ENCODE measurements at regions of chr16 and their contacts with region 1.

Region 1: DNA sequence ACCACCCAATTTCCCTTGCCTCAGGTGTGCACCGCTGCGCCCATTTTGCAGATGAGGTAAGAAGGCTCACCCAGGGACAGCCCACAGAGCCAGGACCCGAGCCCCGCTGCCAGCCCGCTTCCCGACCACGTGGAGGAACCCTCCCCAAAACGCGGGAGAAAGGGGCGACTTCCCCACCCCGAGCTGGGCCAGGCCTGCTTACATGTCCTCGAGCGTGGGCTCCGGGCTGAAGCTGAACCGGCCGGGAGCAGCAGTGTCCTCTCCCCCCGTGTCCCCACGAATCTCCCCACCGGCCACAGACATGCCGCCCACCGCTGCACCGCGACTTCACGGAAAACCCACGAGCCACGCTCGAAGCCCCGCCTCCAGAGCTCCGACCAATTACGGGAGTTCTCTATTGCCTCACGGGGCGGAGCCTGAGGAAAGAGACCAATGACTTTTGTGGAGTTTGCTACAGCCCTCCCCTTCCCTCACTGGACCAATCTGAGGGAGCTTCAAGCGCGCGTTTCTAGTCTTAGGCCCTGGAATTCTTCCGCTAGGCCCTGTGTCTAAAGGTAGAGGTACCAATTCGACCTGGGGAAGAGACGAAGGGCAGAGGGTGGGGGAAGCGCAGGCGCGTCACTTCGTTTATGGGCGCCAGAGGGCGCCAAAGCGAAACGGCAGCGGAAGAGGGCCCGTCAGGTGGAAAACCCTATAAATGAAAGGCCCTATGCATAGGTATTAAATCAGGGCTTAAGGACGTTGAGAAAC is at the start of gene DCTPP1:
- DNase-seq: peak; percentile 98 to 100
- ATAC-seq: peak; percentile 99
- H3K4me3 ChIP-seq: peak within 1 kb of the TSS; percentile 70
- H3K27ac ChIP-seq: peak within 1 kb of the TSS; percentile 77 to 89
- H3K4me1 ChIP-seq: peaks cover 12% of the 10 kb centered on the region
- CTCF ChIP-seq: peak; percentile 95
- EP300 ChIP-seq: no peak
- POLR2A ChIP-seq: peak; percentile 48; the same call in 1 of the 2 replicates
- RAD21 ChIP-seq: peak; percentile 73 to 91
- polyA plus RNA-seq, gene DCTPP1: 105 and 122 TPM in 2 replicates

Region 2: GRCh38 chr16:30104090-30104489 is 325.8 kb before region 1 on chr16:
- CTCF ChIA-PET with region 1: no interaction called
- POLR2A ChIA-PET with region 1: no interaction called
- DNase-seq: no peak
- ATAC-seq: no peak
- H3K4me3 ChIP-seq: no peak overlapping the region
- H3K27ac ChIP-seq: no peak overlapping the region
- H3K4me1 ChIP-seq: no peaks in the 10 kb centered on the region
- CTCF ChIP-seq: no peak
- EP300 ChIP-seq: no peak
- POLR2A ChIP-seq: no peak
- RAD21 ChIP-seq: no peak

Region 3: DNA sequence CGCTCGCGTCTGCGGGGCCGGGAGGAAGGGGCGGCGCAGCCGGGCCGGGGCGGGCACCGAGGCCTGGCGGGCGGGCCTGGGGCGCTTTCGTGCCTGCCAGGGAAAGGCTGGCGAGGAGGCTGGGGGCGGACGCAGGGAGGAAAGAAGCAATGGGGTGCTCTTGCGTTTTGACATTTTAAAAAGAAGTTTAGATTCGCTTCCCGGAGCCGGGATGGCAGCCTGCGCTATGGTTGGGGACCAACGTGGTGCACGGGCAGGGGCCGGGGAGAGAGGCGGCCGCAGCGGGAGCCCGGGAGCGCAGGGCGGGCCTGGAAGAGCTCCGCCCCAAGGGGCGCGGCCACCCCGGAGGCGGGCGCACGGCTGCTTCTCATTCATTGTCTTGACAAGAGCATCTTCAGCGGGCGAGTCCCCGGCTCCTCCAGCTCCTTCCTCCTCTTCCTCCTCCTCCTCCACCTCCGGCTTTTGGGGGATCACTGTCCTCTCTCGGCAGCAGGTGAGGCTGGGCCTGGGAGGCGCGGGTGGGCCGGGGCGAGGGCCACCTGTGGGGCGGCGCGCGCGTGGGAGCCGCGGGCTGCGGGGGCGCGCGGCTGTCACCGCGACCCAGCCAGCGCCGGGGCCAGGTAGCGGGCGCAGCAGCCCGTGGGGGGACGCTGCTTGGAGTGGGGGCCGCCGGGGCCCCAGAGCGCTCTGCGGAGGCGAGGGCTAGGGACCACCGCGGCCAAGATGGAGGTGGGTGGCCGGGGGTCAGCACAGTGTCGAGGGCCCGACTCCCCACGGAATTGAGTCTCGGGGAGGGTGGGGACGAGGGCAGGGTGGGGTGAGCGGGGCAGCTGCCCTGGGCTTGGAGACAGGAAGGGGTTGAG is 246.4 kb before region 1 on chr16 and contains the start of gene CORO1A:
- CTCF ChIA-PET with region 1: no interaction called
- POLR2A ChIA-PET with region 1: no interaction called
- DNase-seq: peak; percentile 67 to 85
- ATAC-seq: peak; percentile 84 to 88
- H3K4me3 ChIP-seq: peak within 1 kb of the TSS; percentile 55
- H3K27ac ChIP-seq: peak within 1 kb of the TSS; percentile 70 to 93
- H3K4me1 ChIP-seq: peaks cover 21% of the 10 kb centered on the region; the same call in 2 of the 3 replicates
- CTCF ChIP-seq: no peak
- EP300 ChIP-seq: no peak
- POLR2A ChIP-seq: peak; percentile 52
- RAD21 ChIP-seq: no peak
- polyA plus RNA-seq, gene CORO1A: 0.82 and 0.83 TPM in 2 replicates

Region 4: GRCh38 chr16:30354423-30355143 is 75.3 kb before region 1 on chr16:
- CTCF ChIA-PET with region 1: no interaction called
- POLR2A ChIA-PET with region 1: no interaction called
- DNase-seq: no peak
- ATAC-seq: peak; percentile 15 to 54
- H3K4me3 ChIP-seq: peak overlapping the region; percentile 70
- H3K27ac ChIP-seq: peak overlapping the region; percentile 87 to 96
- H3K4me1 ChIP-seq: peaks cover 50% of the 10 kb centered on the region
- CTCF ChIP-seq: no peak
- EP300 ChIP-seq: no peak
- POLR2A ChIP-seq: no peak
- RAD21 ChIP-seq: no peak

Region 5: DNA sequence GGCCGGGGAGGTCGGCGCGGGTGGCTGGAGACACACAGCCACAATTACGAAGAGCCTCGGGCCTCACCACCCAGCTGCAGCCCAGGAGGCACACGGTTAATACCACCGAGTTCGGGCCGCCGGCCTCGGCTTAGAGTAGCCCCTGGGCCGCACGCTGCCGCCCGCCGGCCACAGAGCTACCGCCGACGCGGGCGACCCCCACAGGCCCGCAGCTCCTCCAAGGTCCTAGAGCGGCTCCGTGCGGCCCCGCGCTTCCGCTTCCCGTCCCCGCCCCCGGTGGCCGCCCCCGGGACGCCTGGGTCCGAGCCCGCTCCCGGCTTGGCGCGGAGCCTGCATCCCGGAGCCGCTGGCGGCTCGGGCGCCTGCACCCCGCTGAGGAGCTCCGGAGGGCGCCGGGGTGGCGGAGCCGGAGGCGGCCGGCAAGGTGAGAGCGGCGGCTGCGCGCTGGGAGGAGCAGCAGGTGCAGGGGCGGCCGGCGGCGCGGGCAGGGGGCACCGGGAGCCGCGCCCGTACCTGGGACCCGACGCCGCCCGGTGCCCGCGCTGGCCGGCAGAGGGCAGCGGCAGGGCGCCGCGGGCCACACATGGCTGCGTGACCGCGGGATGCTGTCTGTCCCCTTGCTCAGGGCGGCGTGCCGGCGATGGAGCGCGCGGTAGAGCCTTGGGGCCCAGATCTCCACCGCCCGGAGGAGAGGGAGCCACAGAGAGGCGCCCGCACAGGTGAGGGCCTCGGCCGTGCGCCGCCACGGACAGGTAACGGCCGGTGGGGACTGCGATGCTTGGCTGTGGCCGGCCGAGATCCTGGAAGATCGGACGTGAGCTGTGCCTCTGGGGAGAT is 34.5 kb before region 1 on chr16 and contains the start of gene ZNF48:
- CTCF ChIA-PET with region 1: interaction called, 11 read pairs
- POLR2A ChIA-PET with region 1: no interaction called
- DNase-seq: peak; percentile 59 to 88
- ATAC-seq: peak; percentile 82 to 88
- H3K4me3 ChIP-seq: peak within 1 kb of the TSS; percentile 86
- H3K27ac ChIP-seq: peak within 1 kb of the TSS; percentile 95 to 98
- H3K4me1 ChIP-seq: peaks cover 12% of the 10 kb centered on the region
- CTCF ChIP-seq: peak; percentile 65
- EP300 ChIP-seq: no peak
- POLR2A ChIP-seq: peak; percentile 52
- RAD21 ChIP-seq: peak; percentile 4 to 36; a peak in 2 of 5 replicates
- polyA plus RNA-seq, gene ZNF48: 7.0 and 9.3 TPM in 2 replicates

Region 6: DNA sequence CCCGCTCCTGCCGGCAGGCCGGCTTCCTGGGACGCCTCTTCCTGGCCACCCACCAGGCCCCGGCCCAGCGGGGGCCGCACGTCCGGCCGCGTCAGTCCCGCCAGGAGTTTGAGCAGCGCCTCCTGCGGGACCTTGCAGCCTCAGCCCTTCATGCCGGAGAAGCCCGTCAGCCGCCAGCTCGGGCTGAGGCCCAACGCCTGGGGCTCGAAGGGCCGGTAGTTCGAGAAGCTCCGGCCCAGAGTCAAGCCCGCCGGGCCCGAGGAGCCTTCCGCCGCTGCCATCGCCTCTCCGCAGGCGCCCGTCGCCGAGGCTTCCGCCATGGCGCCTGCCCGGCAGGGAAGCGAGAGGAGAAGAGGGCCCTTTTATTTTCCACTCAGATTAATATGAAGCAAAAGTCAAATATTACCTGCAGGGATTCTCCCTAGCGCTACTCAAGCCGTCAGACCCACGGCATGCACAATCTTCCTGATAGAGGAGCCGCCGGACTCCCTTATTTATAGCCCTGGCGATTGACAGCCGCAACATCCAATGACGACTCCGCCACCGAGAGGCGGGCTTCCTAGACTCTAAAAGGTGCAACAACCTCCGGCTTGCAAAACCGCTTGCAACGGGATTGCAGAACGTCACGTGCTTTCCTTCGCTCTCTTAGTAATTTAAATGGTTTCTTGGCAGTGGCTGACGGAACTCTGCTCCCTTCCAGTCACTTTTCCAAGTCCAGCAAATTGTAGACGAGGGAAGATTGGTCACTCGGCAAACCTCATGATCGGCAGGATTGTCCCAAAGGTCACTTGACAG is 15.8 kb after region 1 on chr16 and contains the start of gene SEPHS2:
- CTCF ChIA-PET with region 1: interaction called, 38 read pairs
- POLR2A ChIA-PET with region 1: interaction called, 11 read pairs
- DNase-seq: peak; percentile 92 to 98
- ATAC-seq: peak; percentile 94 to 95
- H3K4me3 ChIP-seq: peak within 1 kb of the TSS; percentile 84
- H3K27ac ChIP-seq: peak within 1 kb of the TSS; percentile 91 to 99
- H3K4me1 ChIP-seq: peaks cover 19% of the 10 kb centered on the region
- CTCF ChIP-seq: peak; percentile 40
- EP300 ChIP-seq: no peak
- POLR2A ChIP-seq: peak; percentile 79
- RAD21 ChIP-seq: peak in 1 of 2 experiments; percentile 18; a peak in 1 of 5 replicates
- polyA plus RNA-seq, gene SEPHS2: 61.5 and 72.6 TPM in 2 replicates

Region 7: DNA sequence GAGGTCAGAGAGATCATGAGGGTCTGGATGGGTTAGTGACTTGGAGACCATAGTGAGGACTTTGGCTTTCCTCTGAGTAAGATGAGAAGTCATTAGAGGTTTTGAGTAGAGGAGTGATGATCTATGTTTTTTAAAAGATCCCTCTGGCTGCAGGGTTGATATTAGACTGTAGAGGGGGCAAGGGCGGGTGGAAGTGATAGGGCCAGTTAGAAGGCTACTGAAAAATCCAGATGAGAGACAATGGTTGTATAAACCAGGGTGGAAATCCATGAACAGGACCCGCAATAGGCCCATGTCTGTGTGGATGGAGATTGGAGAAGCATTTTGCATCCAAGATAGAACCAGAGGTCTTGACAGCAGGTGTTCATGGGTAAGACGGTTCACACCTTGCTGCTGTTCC is 52.5 kb after region 1 on chr16:
- CTCF ChIA-PET with region 1: no interaction called
- POLR2A ChIA-PET with region 1: no interaction called
- DNase-seq: peak in 1 of 2 experiments; percentile 28
- ATAC-seq: peak; percentile 73 to 76; a peak in 4 of 6 replicates
- H3K4me3 ChIP-seq: no peak overlapping the region
- H3K27ac ChIP-seq: no peak overlapping the region
- H3K4me1 ChIP-seq: no peaks in the 10 kb centered on the region
- CTCF ChIP-seq: no peak
- EP300 ChIP-seq: no peak
- POLR2A ChIP-seq: no peak
- RAD21 ChIP-seq: peak in 1 of 2 experiments; percentile 8; a peak in 1 of 5 replicates

Region 8: DNA sequence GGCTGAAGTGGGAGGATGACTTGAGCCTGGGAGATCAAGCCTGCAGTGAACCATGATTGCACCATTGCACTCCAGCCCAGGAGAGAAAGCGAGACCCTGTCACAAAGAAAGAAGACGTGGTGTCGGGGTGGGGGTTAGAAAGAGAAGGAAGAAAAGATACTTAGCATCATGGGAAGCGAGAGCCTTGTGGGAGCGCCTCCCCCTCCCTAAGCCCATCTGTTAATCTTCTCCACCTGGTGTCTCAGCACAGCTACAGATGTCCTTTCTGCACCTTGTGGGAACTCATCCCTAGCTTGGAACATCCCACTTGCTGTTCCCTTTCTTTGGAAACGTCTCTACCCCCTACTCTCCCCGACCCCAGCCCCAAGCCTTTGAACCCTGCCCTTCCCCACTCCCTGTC is 135.7 kb after region 1 on chr16:
- CTCF ChIA-PET with region 1: interaction called, 12 read pairs
- POLR2A ChIA-PET with region 1: no interaction called
- DNase-seq: no peak
- ATAC-seq: no peak
- H3K4me3 ChIP-seq: no peak overlapping the region
- H3K27ac ChIP-seq: 0 out of 6 replicates have a peak overlapping the region, but pooled peaks of 1 of the 2 experiments have one; percentile 11
- H3K4me1 ChIP-seq: peaks cover 26% of the 10 kb centered on the region
- CTCF ChIP-seq: no peak
- EP300 ChIP-seq: no peak
- POLR2A ChIP-seq: no peak
- RAD21 ChIP-seq: no peak

Region 9: GRCh38 chr16:30621765-30622164 is 191.9 kb after region 1 on chr16:
- CTCF ChIA-PET with region 1: interaction called, 37 read pairs
- POLR2A ChIA-PET with region 1: no interaction called
- DNase-seq: no peak
- ATAC-seq: no peak
- H3K4me3 ChIP-seq: no peak overlapping the region
- H3K27ac ChIP-seq: no peak overlapping the region
- H3K4me1 ChIP-seq: no peaks in the 10 kb centered on the region
- CTCF ChIP-seq: no peak
- EP300 ChIP-seq: no peak
- POLR2A ChIP-seq: no peak
- RAD21 ChIP-seq: no peak

Region 10: GRCh38 chr16:30644334-30644830 is 214.5 kb after region 1 on chr16:
- CTCF ChIA-PET with region 1: interaction called, 12 read pairs
- POLR2A ChIA-PET with region 1: no interaction called
- DNase-seq: no peak
- ATAC-seq: no peak
- H3K4me3 ChIP-seq: no peak overlapping the region
- H3K27ac ChIP-seq: no peak overlapping the region
- H3K4me1 ChIP-seq: no peaks in the 10 kb centered on the region
- CTCF ChIP-seq: no peak
- EP300 ChIP-seq: no peak
- POLR2A ChIP-seq: no peak
- RAD21 ChIP-seq: no peak

Measured in A549 (cell line).